ENCODE measurements at regions of chr4 and their contacts with region 1.

Region 1: GRCh38 chr4:168361365-168362024 is 42.9 kb upstream of the DDX60 start:
- DNase-seq: no peak
- H3K4me3 ChIP-seq: no peak overlapping the region
- CTCF ChIP-seq: no peak
- POLR2A ChIP-seq: no peak

Region 2: DNA sequence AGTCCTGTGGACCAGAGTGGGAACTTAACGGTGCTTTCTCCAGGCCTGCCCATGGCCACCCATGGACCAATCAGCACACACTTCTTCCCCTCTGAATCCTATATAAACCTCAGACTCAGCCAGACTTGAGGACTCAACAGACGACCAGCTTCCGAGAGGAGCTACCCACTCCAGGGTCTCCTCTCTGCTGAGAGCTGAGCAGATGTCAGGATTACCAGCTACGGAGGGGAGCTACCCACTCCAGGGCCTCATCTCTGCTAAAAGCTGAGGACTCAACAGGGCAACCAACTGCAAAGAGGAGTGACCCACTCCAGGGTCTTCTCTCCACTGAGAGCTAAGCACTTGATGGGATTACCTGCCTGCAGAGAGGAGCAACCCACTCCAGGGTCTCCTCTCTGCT is 37.1 kb after region 1 on chr4:
- intact Hi-C with region 1: loop called (anchors 1 kb)
- DNase-seq: no peak
- H3K4me3 ChIP-seq: no peak overlapping the region
- CTCF ChIP-seq: no peak
- POLR2A ChIP-seq: no peak

Measured in lower leg skin (tissue), 4 donors.